ENCODE measurements at regions of chr4 and their contacts with region 1.

Region 1: DNA sequence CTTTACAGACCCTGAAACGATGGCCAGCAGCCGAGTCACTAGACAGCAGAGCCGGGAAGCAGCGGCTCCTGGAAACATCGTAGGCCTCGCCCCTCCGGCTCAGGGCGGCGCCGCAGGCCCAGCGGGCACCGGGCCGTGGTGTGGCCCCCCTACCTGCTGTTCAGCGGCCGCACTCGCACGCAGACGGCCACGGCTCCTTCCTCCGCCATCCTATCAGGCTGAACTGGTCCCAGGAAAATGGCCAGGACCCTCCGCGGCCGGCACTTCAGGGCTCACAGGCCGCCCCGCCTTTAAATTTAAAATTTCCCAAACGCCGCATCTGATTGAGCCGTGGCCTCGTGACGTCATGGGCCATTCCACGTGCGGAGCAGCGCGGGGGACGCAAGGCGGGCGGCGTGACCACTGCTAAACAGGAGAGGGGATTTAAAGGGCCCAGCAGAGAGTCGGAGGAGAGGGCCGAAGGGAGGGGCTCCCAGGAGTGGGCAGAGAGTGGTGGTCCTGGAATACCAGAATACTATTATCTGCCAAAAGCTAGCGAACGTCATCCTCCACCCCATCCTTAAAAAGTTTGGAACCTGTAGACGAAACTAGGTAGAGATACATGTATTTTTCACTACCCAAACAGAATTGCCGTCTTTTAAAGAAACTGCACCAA is at the start of gene CENPE:
- DNase-seq: peak; percentile 76 to 92 (median 84)
- ATAC-seq: peak; percentile 84
- H3K4me3 ChIP-seq: peak within 1 kb of the TSS; percentile 72 to 81
- H3K4me3 Mint-ChIP-seq: peak within 1 kb of the TSS; percentile 98
- H3K27ac ChIP-seq: peak within 1 kb of the TSS; percentile 85 to 87
- H3K27ac Mint-ChIP-seq: peak within 1 kb of the TSS; percentile 99
- H3K4me1 ChIP-seq: peaks cover 11% of the 10 kb centered on the region
- H3K4me1 Mint-ChIP-seq: peaks cover 12% of the 10 kb centered on the region
- H3K27me3 ChIP-seq: no peaks in the 10 kb centered on the region
- H3K27me3 Mint-ChIP-seq: no peaks in the 10 kb centered on the region
- CTCF ChIP-seq: no peak
- total RNA-seq, gene CENPE: 0.97 to 3.1 TPM

Region 2: DNA sequence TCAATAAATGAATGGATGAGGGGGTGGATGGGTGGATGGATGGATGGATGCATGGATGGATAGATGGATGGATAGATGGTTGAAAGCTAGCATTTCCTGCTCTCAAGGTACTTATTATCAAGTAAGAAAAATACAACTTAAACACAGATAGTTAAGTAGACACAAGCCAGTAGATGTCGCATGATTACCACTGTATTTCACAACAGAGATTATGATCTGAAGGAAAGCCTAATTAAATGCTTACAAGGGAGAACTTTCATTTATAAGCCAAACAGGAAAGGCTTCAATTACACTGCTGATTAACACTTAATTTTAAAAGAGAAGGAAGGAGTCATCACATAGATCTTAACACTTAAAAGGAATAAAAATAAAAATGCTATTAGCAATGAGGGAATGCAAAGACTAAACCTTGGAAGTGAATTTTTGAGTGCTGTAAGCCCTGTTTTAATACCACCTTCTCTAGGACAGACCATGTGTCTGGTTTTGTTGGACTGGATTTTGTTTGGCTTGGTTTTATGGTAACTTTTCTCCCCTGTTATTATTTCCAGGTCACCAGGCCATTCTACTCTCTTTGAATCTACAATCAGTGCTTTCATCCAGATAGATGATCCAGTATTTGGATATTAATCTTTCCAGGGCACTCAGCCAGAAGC is 777.5 kb before region 1 on chr4:
- CTCF ChIA-PET with region 1: no interaction called
- POLR2A ChIA-PET with region 1: no interaction called
- intact Hi-C with region 1: loop called in 1 of 2 experiments (anchors 10 kb)
- DNase-seq: peak in 2 of 9 experiments; percentile 18 to 26
- ATAC-seq: no peak
- H3K4me3 ChIP-seq: no peak overlapping the region
- H3K4me3 Mint-ChIP-seq: no peak overlapping the region
- H3K27ac ChIP-seq: no peak overlapping the region
- H3K27ac Mint-ChIP-seq: no peak overlapping the region
- H3K4me1 ChIP-seq: no peaks in the 10 kb centered on the region
- H3K4me1 Mint-ChIP-seq: peaks cover 9% of the 10 kb centered on the region
- H3K27me3 ChIP-seq: no peaks in the 10 kb centered on the region
- H3K27me3 Mint-ChIP-seq: no peaks in the 10 kb centered on the region
- CTCF ChIP-seq: no peak

Region 3: GRCh38 chr4:103318327-103318726 is 120.1 kb after region 1 on chr4:
- CTCF ChIA-PET with region 1: no interaction called
- POLR2A ChIA-PET with region 1: no interaction called
- intact Hi-C with region 1: no loop called
- DNase-seq: no peak
- ATAC-seq: no peak
- H3K4me3 ChIP-seq: no peak overlapping the region
- H3K4me3 Mint-ChIP-seq: no peak overlapping the region
- H3K27ac ChIP-seq: no peak overlapping the region
- H3K27ac Mint-ChIP-seq: no peak overlapping the region
- H3K4me1 ChIP-seq: no peaks in the 10 kb centered on the region
- H3K4me1 Mint-ChIP-seq: no peaks in the 10 kb centered on the region
- H3K27me3 ChIP-seq: no peaks in the 10 kb centered on the region
- H3K27me3 Mint-ChIP-seq: no peaks in the 10 kb centered on the region
- CTCF ChIP-seq: no peak

Measured in CD8-positive, alpha-beta T cell (primary cell).